ENCODE measurements at regions of chr9 and their contacts with region 1.

Region 1: DNA sequence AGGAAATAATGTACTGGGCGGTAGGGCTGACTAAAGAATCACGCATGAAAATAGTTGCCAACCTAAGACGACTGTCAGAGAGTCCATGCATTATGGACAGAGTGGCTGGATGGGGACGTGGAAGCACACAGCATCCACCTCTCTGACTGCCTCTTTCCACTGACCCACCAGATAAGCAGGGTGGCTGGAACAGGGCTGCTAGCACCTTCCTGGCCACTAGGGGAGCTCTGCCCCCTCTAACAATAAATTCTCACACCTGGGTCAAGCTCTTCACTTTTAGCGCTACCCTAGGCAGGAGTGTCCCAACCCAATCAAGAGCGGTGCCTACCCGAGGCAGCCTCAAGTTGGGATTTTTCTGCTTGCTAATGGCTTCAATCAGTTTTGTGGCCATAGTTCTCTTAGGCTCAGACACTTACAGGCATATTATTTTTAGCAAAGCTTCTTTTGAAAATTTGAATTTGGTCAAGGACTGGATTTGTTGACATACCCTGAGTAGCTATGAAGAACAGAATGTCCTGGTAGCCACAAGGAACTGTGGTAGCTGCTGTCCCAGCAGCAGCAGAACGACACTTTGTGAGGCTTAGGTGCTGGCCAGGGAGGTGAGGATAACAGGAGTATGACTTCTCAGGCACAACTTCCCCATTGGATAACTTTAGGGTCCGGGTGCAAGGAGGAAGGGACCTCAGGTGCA is 6.9 kb upstream of the TPM2 start:
- DNase-seq: peak in 4 of 5 donors; percentile 42 to 61 (median 52)
- H3K4me3 ChIP-seq: no peak overlapping the region
- H3K4me3 Mint-ChIP-seq: no peak overlapping the region
- H3K27ac ChIP-seq: no peak overlapping the region
- H3K27ac Mint-ChIP-seq: peak overlapping the region; percentile 35 to 89 (median 79)
- H3K4me1 ChIP-seq: peaks cover 9% of the 10 kb centered on the region
- H3K4me1 Mint-ChIP-seq: peaks cover 7 to 15% (median 12%) of the 10 kb centered on the region in 4 donors
- H3K27me3 ChIP-seq: no peaks in the 10 kb centered on the region
- H3K27me3 Mint-ChIP-seq: no peaks in the 10 kb centered on the region

Region 2: GRCh38 chr9:35603987-35604577 is 92.6 kb before region 1 on chr9:
- CTCF ChIA-PET with region 1: interaction called, 45 read pairs
- POLR2A ChIA-PET with region 1: interaction called, 8 read pairs
- intact Hi-C with region 1: loop called (anchors 1 kb)
- DNase-seq: peak; percentile 98 to 99 (median 99)
- H3K4me3 ChIP-seq: peak overlapping the region; percentile 75 to 84
- H3K4me3 Mint-ChIP-seq: peak overlapping the region; percentile 95 to 100 (median 98)
- H3K27ac ChIP-seq: peak overlapping the region; percentile 85
- H3K27ac Mint-ChIP-seq: peak overlapping the region; percentile 96 to 100 (median 99)
- H3K4me1 ChIP-seq: peaks cover 37% of the 10 kb centered on the region
- H3K4me1 Mint-ChIP-seq: peaks cover 25 to 47% (median 32%) of the 10 kb centered on the region in 4 donors
- H3K27me3 ChIP-seq: no peaks in the 10 kb centered on the region
- H3K27me3 Mint-ChIP-seq: no peaks in the 10 kb centered on the region

Region 3: GRCh38 chr9:35628389-35628991 is 68.2 kb before region 1 on chr9:
- CTCF ChIA-PET with region 1: interaction called, 35 read pairs
- POLR2A ChIA-PET with region 1: no interaction called
- intact Hi-C with region 1: no loop called
- DNase-seq: no peak
- H3K4me3 ChIP-seq: no peak overlapping the region
- H3K4me3 Mint-ChIP-seq: no peak overlapping the region
- H3K27ac ChIP-seq: no peak overlapping the region
- H3K27ac Mint-ChIP-seq: no peak overlapping the region
- H3K4me1 ChIP-seq: no peaks in the 10 kb centered on the region
- H3K4me1 Mint-ChIP-seq: peaks cover 0 to 6% (median 2%) of the 10 kb centered on the region in 4 donors
- H3K27me3 ChIP-seq: no peaks in the 10 kb centered on the region
- H3K27me3 Mint-ChIP-seq: no peaks in the 10 kb centered on the region

Region 4: DNA sequence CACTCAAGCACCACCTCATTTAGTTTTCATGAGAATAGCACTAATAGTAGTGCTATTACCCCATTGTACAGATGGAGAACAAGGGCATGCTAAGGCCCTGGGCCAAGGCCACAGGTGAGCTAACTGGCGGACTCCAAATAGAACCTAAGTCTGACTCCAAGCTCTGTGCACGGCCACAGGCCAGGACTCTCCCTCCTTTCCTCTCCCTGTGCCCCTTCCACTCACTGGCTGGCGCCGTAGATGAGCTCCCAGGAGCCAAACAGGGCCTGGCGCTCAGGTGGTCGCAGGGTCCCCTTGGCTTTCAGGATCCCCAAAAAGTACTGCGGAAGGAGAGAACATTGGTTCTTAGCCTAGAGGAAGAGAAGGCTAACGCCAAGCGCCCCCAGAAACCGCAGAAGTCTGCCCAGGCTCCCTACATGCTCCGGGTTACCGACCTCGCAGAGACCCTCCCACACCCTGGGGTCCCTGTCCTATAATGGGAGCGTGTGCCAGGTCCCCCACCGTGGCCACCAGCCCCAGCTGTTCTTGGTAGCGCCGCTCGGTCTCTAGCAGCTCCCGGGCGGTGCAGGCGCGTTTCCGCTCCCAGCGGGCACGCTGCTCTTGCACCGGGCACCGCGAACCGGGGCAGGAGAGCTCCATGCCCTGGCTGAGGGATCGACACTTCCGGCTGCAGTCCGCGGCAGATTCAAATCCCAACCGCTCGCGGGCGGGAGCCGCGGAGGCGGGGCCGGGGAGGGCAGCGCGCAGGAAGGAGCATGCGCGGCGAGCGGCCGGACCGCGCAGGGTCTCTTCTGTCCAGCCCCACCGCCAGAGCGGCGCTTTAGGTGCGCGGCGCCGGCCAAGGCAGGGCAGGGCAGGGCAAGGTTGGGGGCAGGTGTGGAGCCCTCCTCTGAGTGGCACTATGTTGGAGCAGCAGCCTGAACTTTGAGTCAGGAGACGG is 31.9 kb before region 1 on chr9 and contains the start of gene ARHGEF39:
- CTCF ChIA-PET with region 1: interaction called, 339 read pairs
- POLR2A ChIA-PET with region 1: interaction called, 160 read pairs
- intact Hi-C with region 1: no loop called
- DNase-seq: peak; percentile 64 to 72 (median 67)
- H3K4me3 ChIP-seq: peak within 1 kb of the TSS; percentile 42 to 51
- H3K4me3 Mint-ChIP-seq: peak within 1 kb of the TSS; percentile 83 to 91 (median 88)
- H3K27ac ChIP-seq: peak within 1 kb of the TSS; percentile 96
- H3K27ac Mint-ChIP-seq: peak within 1 kb of the TSS; percentile 82 to 100 (median 97)
- H3K4me1 ChIP-seq: peaks cover 56% of the 10 kb centered on the region
- H3K4me1 Mint-ChIP-seq: peaks cover 44 to 68% (median 56%) of the 10 kb centered on the region in 4 donors
- H3K27me3 ChIP-seq: no peaks in the 10 kb centered on the region
- H3K27me3 Mint-ChIP-seq: no peaks in the 10 kb centered on the region
- total RNA-seq, gene ARHGEF39: not detected

Region 5: DNA sequence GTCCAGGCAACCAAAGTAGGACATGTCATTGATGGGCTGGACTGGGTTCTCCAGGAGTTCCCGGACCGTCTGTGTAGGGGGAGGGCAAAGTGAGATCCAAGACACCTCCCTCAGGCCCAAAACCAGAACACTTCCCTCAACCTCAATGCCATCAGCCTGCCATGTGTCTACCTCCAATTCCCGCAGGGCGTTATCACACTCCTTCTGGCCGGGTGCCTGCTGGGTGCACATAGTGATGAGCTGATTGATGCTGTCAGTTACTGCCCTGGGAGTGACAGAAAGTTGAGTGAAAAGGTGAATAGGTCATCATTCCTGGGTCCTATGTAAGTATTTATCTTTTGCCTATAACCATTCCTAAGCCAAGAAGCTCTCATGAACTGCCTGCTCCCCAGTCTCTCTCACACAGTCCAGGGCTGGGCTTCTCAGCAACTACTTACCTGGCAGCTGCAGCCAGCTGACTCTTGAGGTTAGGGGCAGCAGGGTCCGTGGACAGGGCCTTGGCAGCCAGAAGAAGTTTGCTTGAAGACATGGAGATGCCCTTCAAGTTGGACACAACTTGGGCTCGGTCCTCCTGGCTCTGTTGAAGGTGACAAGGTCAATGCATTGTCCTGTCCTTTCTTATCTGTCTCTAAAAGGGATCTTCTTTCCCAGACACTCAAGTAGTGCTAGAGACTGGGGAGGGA is 14.3 kb after region 1 on chr9:
- CTCF ChIA-PET with region 1: interaction called, 76 read pairs
- POLR2A ChIA-PET with region 1: no interaction called
- intact Hi-C with region 1: no loop called
- DNase-seq: no peak
- H3K4me3 ChIP-seq: no peak overlapping the region
- H3K4me3 Mint-ChIP-seq: no peak overlapping the region
- H3K27ac ChIP-seq: no peak overlapping the region
- H3K27ac Mint-ChIP-seq: peak overlapping the region in 2 of 7 donors; percentile 26 to 44
- H3K4me1 ChIP-seq: no peaks in the 10 kb centered on the region
- H3K4me1 Mint-ChIP-seq: peaks cover 0 to 7% (median 1%) of the 10 kb centered on the region in 4 donors
- H3K27me3 ChIP-seq: no peaks in the 10 kb centered on the region
- H3K27me3 Mint-ChIP-seq: no peaks in the 10 kb centered on the region

Region 6: GRCh38 chr9:35748858-35749514 is 52.3 kb after region 1 on chr9 and contains the starts of genes GBA2 and RGP1:
- CTCF ChIA-PET with region 1: interaction called, 32 read pairs
- POLR2A ChIA-PET with region 1: interaction called, 4 read pairs
- intact Hi-C with region 1: no loop called
- DNase-seq: peak; percentile 50 to 71 (median 62)
- H3K4me3 ChIP-seq: peak within 1 kb of the TSS; percentile 89 to 92
- H3K4me3 Mint-ChIP-seq: peak within 1 kb of the TSS; percentile 92 to 97 (median 94)
- H3K27ac ChIP-seq: peak within 1 kb of the TSS; percentile 82
- H3K27ac Mint-ChIP-seq: peak within 1 kb of the TSS; percentile 87 to 97 (median 96)
- H3K4me1 ChIP-seq: peaks cover 45% of the 10 kb centered on the region
- H3K4me1 Mint-ChIP-seq: peaks cover 37 to 73% (median 51%) of the 10 kb centered on the region in 4 donors
- H3K27me3 ChIP-seq: no peaks in the 10 kb centered on the region
- H3K27me3 Mint-ChIP-seq: no peaks in the 10 kb centered on the region
- total RNA-seq, gene GBA2: 61.1 to 66.3 TPM
- total RNA-seq, gene RGP1: 31.8 to 33.8 TPM

Region 7: DNA sequence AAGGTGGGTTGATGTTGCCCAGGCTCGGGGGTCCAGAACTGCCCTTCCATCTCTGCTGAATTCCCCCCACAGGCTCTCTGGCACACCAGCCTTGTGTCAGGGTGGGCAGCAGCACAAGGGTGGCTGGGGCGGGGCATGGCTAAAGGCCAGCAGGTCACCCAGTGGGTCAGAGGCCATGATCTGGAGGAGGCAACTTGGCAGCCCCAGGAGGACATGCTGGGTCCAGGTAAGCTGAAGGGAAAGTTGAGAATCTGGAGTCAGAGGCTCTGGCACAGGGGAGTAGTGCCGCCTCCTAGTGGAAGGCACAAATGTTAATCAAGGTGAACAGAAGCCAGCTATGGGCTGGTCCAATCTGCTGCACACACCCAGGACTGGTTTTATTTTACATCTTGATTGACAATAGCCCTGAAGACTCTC is 138.6 kb after region 1 on chr9:
- CTCF ChIA-PET with region 1: no interaction called
- POLR2A ChIA-PET with region 1: no interaction called
- intact Hi-C with region 1: no loop called
- DNase-seq: no peak
- H3K4me3 ChIP-seq: no peak overlapping the region
- H3K4me3 Mint-ChIP-seq: no peak overlapping the region
- H3K27ac ChIP-seq: no peak overlapping the region
- H3K27ac Mint-ChIP-seq: peak overlapping the region in 1 of 7 donors; percentile 56
- H3K4me1 ChIP-seq: peaks cover 2% of the 10 kb centered on the region
- H3K4me1 Mint-ChIP-seq: peaks cover 6 to 20% (median 14%) of the 10 kb centered on the region in 4 donors
- H3K27me3 ChIP-seq: no peaks in the 10 kb centered on the region
- H3K27me3 Mint-ChIP-seq: no peaks in the 10 kb centered on the region